Activated T-helper 1 cell treated with anti-CD3 and anti-CD28 coated beads, Interleukin-12 subunit alpha, Interleukin-12 subunit beta, Interleukin-2, Interleukin-4 antibody, amounts not matched to agents 30 ng/mL and 10 ng/mL and 1 ng/mL, durations not matched to agents 14 hours and 24 hours and 36 hours (primary cell): ENCODE measurements at regions of chr4 and their contacts with region 1.

Region 1: GRCh38 chr4:2008875-2009703 is at the start of gene NELFA:
- DNase-seq: peak; percentile 91
- H3K4me3 Mint-ChIP-seq: peak within 1 kb of the TSS; percentile 92
- H3K27ac Mint-ChIP-seq: peak within 1 kb of the TSS; percentile 88
- H3K4me1 Mint-ChIP-seq: peaks cover 31% of the 10 kb centered on the region
- H3K27me3 Mint-ChIP-seq: peaks cover 18% of the 10 kb centered on the region
- total RNA-seq, gene NELFA: 52.9 and 55.4 TPM in 2 replicates

Region 2: GRCh38 chr4:1381944-1382541 is 627.0 kb before region 1 on chr4:
- intact Hi-C with region 1: no loop called
- DNase-seq: no peak
- H3K4me3 Mint-ChIP-seq: no peak overlapping the region
- H3K27ac Mint-ChIP-seq: no peak overlapping the region
- H3K4me1 Mint-ChIP-seq: no peaks in the 10 kb centered on the region
- H3K27me3 Mint-ChIP-seq: no peaks in the 10 kb centered on the region

Region 3: DNA sequence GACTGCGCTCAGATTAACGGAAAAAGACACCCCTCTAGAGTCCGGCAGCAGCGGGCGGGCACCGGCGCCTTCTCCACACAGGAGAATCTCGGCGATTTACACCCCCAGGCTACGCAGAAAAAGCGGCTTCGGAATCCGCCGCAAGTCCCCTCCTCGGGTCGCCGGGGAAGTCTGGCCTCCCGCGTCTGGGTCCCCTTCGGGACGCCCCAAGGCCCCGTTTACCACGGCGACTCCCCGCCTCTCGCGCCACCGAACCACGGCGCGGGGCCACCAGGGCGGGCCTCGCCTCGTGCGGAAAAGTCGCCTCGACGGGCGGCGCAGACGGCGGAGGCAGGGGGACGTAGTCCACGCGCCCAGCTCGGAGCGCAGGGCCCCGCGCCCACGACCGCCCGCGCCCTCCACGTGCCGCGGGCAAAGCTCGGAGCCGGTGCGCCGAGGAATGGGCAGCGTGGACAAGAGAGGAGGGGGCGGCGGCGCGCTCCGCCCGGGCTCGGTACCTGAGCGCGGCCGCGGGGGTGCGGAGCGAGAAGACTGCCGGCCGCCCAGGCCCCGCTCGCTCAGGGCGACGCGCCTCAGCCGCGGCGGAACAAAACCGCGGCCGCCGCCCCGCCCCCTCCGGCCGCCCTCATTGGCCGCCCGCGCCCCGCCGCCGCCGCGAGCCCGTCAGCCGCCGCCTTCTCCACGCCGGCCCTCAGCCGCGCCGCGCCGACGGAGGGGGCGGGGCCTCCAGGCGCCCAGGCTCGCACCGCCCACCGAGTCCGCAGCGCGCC is 325.2 kb before region 1 on chr4 and contains the start of gene FAM53A:
- intact Hi-C with region 1: loop called (anchors 1 kb)
- DNase-seq: peak; percentile 93
- H3K4me3 Mint-ChIP-seq: peak within 1 kb of the TSS; percentile 87
- H3K27ac Mint-ChIP-seq: peak within 1 kb of the TSS; percentile 90
- H3K4me1 Mint-ChIP-seq: peaks cover 12% of the 10 kb centered on the region
- H3K27me3 Mint-ChIP-seq: peaks cover 2% of the 10 kb centered on the region
- total RNA-seq, gene FAM53A: 2.5 and 5.5 TPM in 2 replicates

Region 4: GRCh38 chr4:1721004-1721665 is 288.0 kb before region 1 on chr4 and contains the starts of genes TACC3 and TMEM129:
- intact Hi-C with region 1: loop called (anchors 5 kb)
- DNase-seq: peak; percentile 90
- H3K4me3 Mint-ChIP-seq: peak within 1 kb of the TSS; percentile 94
- H3K27ac Mint-ChIP-seq: peak within 1 kb of the TSS; percentile 97
- H3K4me1 Mint-ChIP-seq: peaks cover 45% of the 10 kb centered on the region
- H3K27me3 Mint-ChIP-seq: no peaks in the 10 kb centered on the region
- total RNA-seq, gene TACC3: 134 and 139 TPM in 2 replicates
- total RNA-seq, gene TMEM129: 27.4 and 28.4 TPM in 2 replicates

Region 5: GRCh38 chr4:2041234-2042130 is 32.4 kb after region 1 on chr4:
- intact Hi-C with region 1: loop called (anchors 1 kb)
- DNase-seq: peak; percentile 87
- H3K4me3 Mint-ChIP-seq: peak overlapping the region; percentile 84
- H3K27ac Mint-ChIP-seq: no peak overlapping the region
- H3K4me1 Mint-ChIP-seq: peaks cover 7% of the 10 kb centered on the region
- H3K27me3 Mint-ChIP-seq: peaks cover 31% of the 10 kb centered on the region

Region 6: GRCh38 chr4:2172161-2172560 is 163.1 kb after region 1 on chr4:
- intact Hi-C with region 1: loop called (anchors 5 kb)
- DNase-seq: peak; percentile 58
- H3K4me3 Mint-ChIP-seq: peak overlapping the region; percentile 61
- H3K27ac Mint-ChIP-seq: peak overlapping the region; percentile 86
- H3K4me1 Mint-ChIP-seq: peaks cover 80% of the 10 kb centered on the region
- H3K27me3 Mint-ChIP-seq: no peaks in the 10 kb centered on the region

Region 7: GRCh38 chr4:2418650-2419571 is 409.8 kb after region 1 on chr4 and contains the start of gene CFAP99:
- intact Hi-C with region 1: loop called (anchors 1 kb)
- DNase-seq: peak; percentile 94
- H3K4me3 Mint-ChIP-seq: peak within 1 kb of the TSS; percentile 85
- H3K27ac Mint-ChIP-seq: peak within 1 kb of the TSS; percentile 82
- H3K4me1 Mint-ChIP-seq: peaks cover 39% of the 10 kb centered on the region
- H3K27me3 Mint-ChIP-seq: peaks cover 55% of the 10 kb centered on the region
- total RNA-seq, gene CFAP99: not detected in 2 replicates

Region 8: GRCh38 chr4:2745981-2746806 is 737.1 kb after region 1 on chr4:
- intact Hi-C with region 1: no loop called
- DNase-seq: peak; percentile 92
- H3K4me3 Mint-ChIP-seq: peak overlapping the region; percentile 79
- H3K27ac Mint-ChIP-seq: peak overlapping the region; percentile 96
- H3K4me1 Mint-ChIP-seq: peaks cover 60% of the 10 kb centered on the region
- H3K27me3 Mint-ChIP-seq: no peaks in the 10 kb centered on the region